A673 (cell line): ENCODE measurements at regions of chr1 and their contacts with region 1.

Region 1: GRCh38 chr1:84753516-84754385 is 63.5 kb upstream of the SSX2IP start:
- DNase-seq: peak; percentile 88
- H3K4me3 ChIP-seq: no peak overlapping the region
- H3K27ac ChIP-seq: no peak overlapping the region
- H3K4me1 ChIP-seq: peaks cover 4% of the 10 kb centered on the region
- H3K27me3 ChIP-seq: no peaks in the 10 kb centered on the region
- CTCF ChIP-seq: peak; percentile 98

Region 2: DNA sequence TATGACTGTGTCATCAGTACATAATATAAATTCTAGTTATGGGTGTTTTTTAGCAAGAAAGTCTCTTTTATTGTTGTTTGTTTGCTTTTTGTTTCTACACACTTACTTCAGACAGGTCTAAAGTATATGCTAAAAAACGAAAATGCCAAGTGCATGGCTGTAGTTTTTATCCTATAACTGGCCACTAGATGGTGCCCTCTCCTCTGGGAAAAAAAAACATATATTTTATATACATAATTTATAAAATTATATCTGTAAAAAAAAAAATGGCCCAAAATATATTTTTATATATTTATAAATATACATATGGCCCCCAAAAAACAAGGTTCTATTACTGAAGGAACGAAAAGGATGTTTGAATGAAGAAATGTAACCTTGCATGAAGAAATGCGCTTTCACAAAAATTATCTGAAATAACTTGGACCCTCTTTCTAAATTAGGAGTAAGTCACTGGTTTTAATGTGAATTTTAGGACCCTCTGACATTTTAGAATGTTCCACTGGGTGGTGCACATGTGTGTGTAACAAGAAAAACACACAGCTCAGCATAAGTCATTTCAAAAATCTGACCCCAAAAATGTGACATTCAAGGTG is 848.3 kb before region 1 on chr1:
- CTCF ChIA-PET with region 1: no interaction called
- POLR2A ChIA-PET with region 1: no interaction called
- intact Hi-C with region 1: loop called (anchors 10 kb)
- DNase-seq: peak; percentile 50
- H3K4me3 ChIP-seq: no peak overlapping the region
- H3K27ac ChIP-seq: no peak overlapping the region
- H3K4me1 ChIP-seq: no peaks in the 10 kb centered on the region
- H3K27me3 ChIP-seq: no peaks in the 10 kb centered on the region
- CTCF ChIP-seq: peak; percentile 67

Region 3: GRCh38 chr1:84143796-84144565 is 609.8 kb before region 1 on chr1 and contains the start of gene PRKACB:
- CTCF ChIA-PET with region 1: interaction called, 5 read pairs
- POLR2A ChIA-PET with region 1: no interaction called
- intact Hi-C with region 1: loop called (anchors 5 kb)
- DNase-seq: peak; percentile 72
- H3K4me3 ChIP-seq: peak within 1 kb of the TSS; percentile 3
- H3K27ac ChIP-seq: peak within 1 kb of the TSS; percentile 56
- H3K4me1 ChIP-seq: peaks cover 17% of the 10 kb centered on the region
- H3K27me3 ChIP-seq: no peaks in the 10 kb centered on the region
- CTCF ChIP-seq: no peak
- total RNA-seq, gene PRKACB: 33.6 and 39.6 TPM in 2 replicates

Region 4: GRCh38 chr1:84541679-84542078 is 212.1 kb before region 1 on chr1:
- CTCF ChIA-PET with region 1: no interaction called
- POLR2A ChIA-PET with region 1: no interaction called
- intact Hi-C with region 1: loop called (anchors 5 kb)
- DNase-seq: no peak
- H3K4me3 ChIP-seq: no peak overlapping the region
- H3K27ac ChIP-seq: no peak overlapping the region
- H3K4me1 ChIP-seq: peaks cover 6% of the 10 kb centered on the region
- H3K27me3 ChIP-seq: no peaks in the 10 kb centered on the region
- CTCF ChIP-seq: peak; percentile 48

Region 5: DNA sequence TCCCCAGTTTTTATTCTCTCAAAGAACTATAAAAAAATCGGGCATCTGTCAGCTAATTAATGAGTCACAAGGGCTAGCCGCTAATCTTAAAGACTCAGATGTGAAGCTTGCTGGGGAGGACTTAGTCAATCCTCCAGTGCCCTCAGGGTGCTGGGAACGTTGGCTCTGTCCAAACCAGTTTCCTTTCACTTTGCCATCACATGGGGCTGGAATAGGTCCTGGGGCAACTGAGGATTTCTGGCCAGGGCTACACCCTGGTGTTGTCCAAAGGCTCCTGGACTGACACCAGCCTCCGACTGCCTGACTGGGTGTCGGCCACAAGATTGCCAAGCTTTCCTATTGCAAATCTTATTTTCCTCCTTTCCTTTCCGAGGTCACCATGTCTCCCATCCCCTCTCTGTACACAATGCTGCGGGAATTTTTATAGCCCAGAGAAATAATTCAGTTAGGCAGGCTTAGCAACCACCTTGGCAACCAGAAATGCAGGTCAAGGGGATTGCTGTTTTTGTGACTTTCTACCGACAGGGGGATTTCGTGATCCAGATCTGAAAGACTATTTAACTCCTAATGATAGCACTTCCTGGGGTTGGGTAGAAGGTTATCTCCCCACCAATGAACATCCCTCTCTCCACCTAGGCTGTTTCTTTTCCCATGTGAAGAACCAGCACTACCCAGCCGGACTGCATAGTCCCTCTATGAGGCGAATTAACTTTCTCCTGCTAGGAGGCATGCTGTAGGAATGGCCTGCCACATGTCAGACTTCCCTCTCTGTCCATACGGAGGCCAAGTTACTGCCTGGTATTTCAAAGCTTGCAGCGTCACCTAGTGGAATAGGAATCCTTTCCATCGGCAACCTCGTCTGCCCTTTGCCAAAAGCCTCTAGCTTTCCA is 149.6 kb before region 1 on chr1:
- CTCF ChIA-PET with region 1: no interaction called
- POLR2A ChIA-PET with region 1: no interaction called
- intact Hi-C with region 1: no loop called
- DNase-seq: peak; percentile 21
- H3K4me3 ChIP-seq: no peak overlapping the region
- H3K27ac ChIP-seq: no peak overlapping the region
- H3K4me1 ChIP-seq: no peaks in the 10 kb centered on the region
- H3K27me3 ChIP-seq: no peaks in the 10 kb centered on the region
- CTCF ChIP-seq: 0 out of 2 replicates have a peak, but pooled peaks have one; percentile 11

Region 6: DNA sequence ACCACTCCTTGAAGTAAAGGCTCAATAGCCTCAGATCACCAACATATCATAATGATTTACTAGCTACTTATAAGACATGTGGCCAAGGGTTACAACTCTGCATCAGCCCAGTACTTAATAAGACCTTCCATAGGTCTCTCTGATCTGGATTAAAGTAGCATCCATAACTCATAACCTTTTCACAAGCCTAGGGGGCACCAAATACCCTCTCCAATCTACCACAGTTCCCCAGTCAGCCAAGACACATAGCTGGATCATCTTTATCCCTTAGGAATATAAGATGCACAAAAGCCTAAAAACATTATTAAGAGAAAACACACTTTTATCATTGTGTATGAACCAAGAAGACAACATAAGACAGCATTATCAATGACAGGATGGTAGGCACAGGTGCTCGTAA is 85.6 kb before region 1 on chr1:
- CTCF ChIA-PET with region 1: interaction called, 6 read pairs
- POLR2A ChIA-PET with region 1: no interaction called
- intact Hi-C with region 1: loop called (anchors 2 kb)
- DNase-seq: peak; percentile 43
- H3K4me3 ChIP-seq: no peak overlapping the region
- H3K27ac ChIP-seq: no peak overlapping the region
- H3K4me1 ChIP-seq: no peaks in the 10 kb centered on the region
- H3K27me3 ChIP-seq: no peaks in the 10 kb centered on the region
- CTCF ChIP-seq: peak; percentile 57

Region 7: GRCh38 chr1:84883286-84883685 is 129.5 kb after region 1 on chr1:
- CTCF ChIA-PET with region 1: no interaction called
- POLR2A ChIA-PET with region 1: no interaction called
- intact Hi-C with region 1: no loop called
- DNase-seq: no peak
- H3K4me3 ChIP-seq: no peak overlapping the region
- H3K27ac ChIP-seq: no peak overlapping the region
- H3K4me1 ChIP-seq: no peaks in the 10 kb centered on the region
- H3K27me3 ChIP-seq: peaks cover 6% of the 10 kb centered on the region
- CTCF ChIP-seq: no peak

Region 8: GRCh38 chr1:84896279-84896678 is 142.5 kb after region 1 on chr1:
- CTCF ChIA-PET with region 1: no interaction called
- POLR2A ChIA-PET with region 1: no interaction called
- intact Hi-C with region 1: no loop called
- DNase-seq: no peak
- H3K4me3 ChIP-seq: no peak overlapping the region
- H3K27ac ChIP-seq: no peak overlapping the region
- H3K4me1 ChIP-seq: no peaks in the 10 kb centered on the region
- H3K27me3 ChIP-seq: peaks cover 38% of the 10 kb centered on the region
- CTCF ChIP-seq: no peak